Sigmoid colon (tissue), 7 donors: ENCODE measurements at regions of chr7 and their contacts with region 1.

Region 1: GRCh38 chr7:1758028-1758858 is 88.2 kb downstream of the ELFN1 start:
- DNase-seq: peak; percentile 63
- H3K4me3 ChIP-seq: no peak overlapping the region
- H3K27ac ChIP-seq: no peak overlapping the region
- H3K4me1 ChIP-seq: no peaks in the 10 kb centered on the region
- H3K27me3 ChIP-seq: peaks cover 5 to 33% (median 11%) of the 10 kb centered on the region in 3 donors
- CTCF ChIP-seq: peak in 1 of 4 experiments; percentile 20
- EP300 ChIP-seq: no peak
- POLR2A ChIP-seq: no peak

Region 2: GRCh38 chr7:1664711-1665548 is 93.3 kb before region 1 on chr7:
- intact Hi-C with region 1: loop called (anchors 1 kb)
- DNase-seq: peak; percentile 62
- H3K4me3 ChIP-seq: peak overlapping the region; percentile 11 to 57 (median 49)
- H3K27ac ChIP-seq: peak overlapping the region in 3 of 4 donors; percentile 12 to 34 (median 32)
- H3K4me1 ChIP-seq: peaks cover 0 to 50% (median 48%) of the 10 kb centered on the region in 4 donors
- H3K27me3 ChIP-seq: peaks cover 57 to 80% (median 78%) of the 10 kb centered on the region in 3 donors
- CTCF ChIP-seq: peak in 3 of 4 experiments; percentile 17 to 82 (median 25)
- EP300 ChIP-seq: no peak
- POLR2A ChIP-seq: no peak

Region 3: GRCh38 chr7:1689311-1689710 is 68.9 kb before region 1 on chr7:
- intact Hi-C with region 1: no loop called
- DNase-seq: no peak
- H3K4me3 ChIP-seq: no peak overlapping the region
- H3K27ac ChIP-seq: no peak overlapping the region
- H3K4me1 ChIP-seq: peaks cover 0 to 16% (median 15%) of the 10 kb centered on the region in 4 donors
- H3K27me3 ChIP-seq: peaks cover 0 to 5% (median 3%) of the 10 kb centered on the region in 3 donors
- CTCF ChIP-seq: no peak
- EP300 ChIP-seq: no peak
- POLR2A ChIP-seq: no peak